Heart left ventricle (tissue), 16 donors: ENCODE measurements at regions of chr3 and their contacts with region 1.

Region 1: GRCh38 chr3:42652611-42653302 is 740 bp upstream of the ZBTB47 start:
- DNase-seq: peak; percentile 60 to 77 (median 75)
- ATAC-seq: peak; percentile 16 to 58 (median 50)
- H3K4me3 ChIP-seq: peak overlapping the region in 11 of 12 donors; percentile 68 to 99 (median 89)
- H3K27ac ChIP-seq: peak overlapping the region; percentile 84 to 99 (median 94)
- H3K4me1 ChIP-seq: peaks cover 11 to 88% (median 51%) of the 10 kb centered on the region in 12 donors
- H3K27me3 ChIP-seq: no peaks in the 10 kb centered on the region
- CTCF ChIP-seq: no peak
- POLR2A ChIP-seq: peak in 1 of 2 donors; percentile 84

Region 2: GRCh38 chr3:42214565-42215283 is 438.0 kb before region 1 on chr3:
- intact Hi-C with region 1: no loop called
- DNase-seq: no peak
- ATAC-seq: no peak
- H3K4me3 ChIP-seq: no peak overlapping the region
- H3K27ac ChIP-seq: no peak overlapping the region
- H3K4me1 ChIP-seq: peaks cover 0 to 11% (median 0%) of the 10 kb centered on the region in 12 donors
- H3K27me3 ChIP-seq: no peaks in the 10 kb centered on the region
- CTCF ChIP-seq: no peak
- POLR2A ChIP-seq: no peak

Region 3: GRCh38 chr3:42367903-42368302 is 284.9 kb before region 1 on chr3:
- intact Hi-C with region 1: no loop called
- DNase-seq: no peak
- ATAC-seq: no peak
- H3K4me3 ChIP-seq: no peak overlapping the region
- H3K27ac ChIP-seq: no peak overlapping the region
- H3K4me1 ChIP-seq: peaks cover 0 to 12% (median 3%) of the 10 kb centered on the region in 12 donors
- H3K27me3 ChIP-seq: no peaks in the 10 kb centered on the region
- CTCF ChIP-seq: no peak
- POLR2A ChIP-seq: no peak

Region 4: GRCh38 chr3:42581709-42582473 is 70.9 kb before region 1 on chr3 and contains the start of gene SEC22C:
- intact Hi-C with region 1: loop called in 2 of 10 experiments (anchors 5 to 10 kb)
- DNase-seq: peak; percentile 95 to 98 (median 96)
- ATAC-seq: peak; percentile 98 to 99 (median 99)
- H3K4me3 ChIP-seq: peak within 1 kb of the TSS; percentile 79 to 96 (median 88)
- H3K27ac ChIP-seq: peak within 1 kb of the TSS; percentile 80 to 95 (median 89)
- H3K4me1 ChIP-seq: peaks cover 0 to 25% (median 14%) of the 10 kb centered on the region in 12 donors
- H3K27me3 ChIP-seq: no peaks in the 10 kb centered on the region
- CTCF ChIP-seq: peak in 9 of 12 donors; percentile 20 to 55 (median 37)
- POLR2A ChIP-seq: peak; percentile 84 to 96
- total RNA-seq, gene SEC22C: 19.9 to 40.5 (median 28.9) TPM

Region 5: DNA sequence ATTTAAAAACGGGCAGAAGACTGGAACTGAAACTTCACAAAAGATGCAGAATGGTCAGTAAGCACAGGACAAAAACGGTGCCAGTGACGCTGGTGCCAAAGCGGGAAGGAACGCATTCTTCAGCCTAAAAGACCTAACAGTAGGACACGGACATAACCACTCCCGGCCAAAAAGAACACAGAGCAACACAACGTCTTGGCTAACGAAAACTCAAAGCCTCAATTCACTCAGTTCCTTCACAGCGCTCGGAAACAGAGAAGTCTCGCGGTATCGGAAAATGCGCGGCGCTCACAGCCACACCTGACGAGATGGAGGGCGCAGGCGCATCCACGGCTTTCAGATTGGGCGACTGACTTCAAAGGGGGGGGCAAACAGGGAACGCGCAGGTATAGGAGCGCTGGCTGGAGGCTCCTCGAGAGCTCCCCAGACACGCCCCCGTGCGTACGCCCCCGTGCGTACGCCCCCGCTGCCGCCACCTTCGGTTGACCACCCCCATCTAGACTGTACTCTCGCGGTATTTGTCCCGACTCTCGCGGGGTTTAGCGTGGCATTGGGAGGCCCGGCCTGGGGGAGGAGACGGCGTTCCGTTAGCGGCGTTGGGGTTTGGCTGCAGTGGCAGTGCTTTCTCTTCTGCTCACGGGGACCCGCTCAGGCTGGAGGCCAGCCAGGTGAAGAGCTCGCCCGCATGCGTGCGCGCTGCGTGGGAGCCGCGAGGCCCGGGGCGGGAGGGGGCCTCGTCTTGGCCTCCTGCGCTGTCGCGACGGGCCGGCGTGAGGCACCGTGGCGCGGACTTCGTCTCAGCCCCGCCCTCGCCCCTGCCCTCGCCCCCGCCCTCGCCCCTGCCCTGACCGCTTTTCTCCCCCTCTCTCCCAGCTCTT is 52.4 kb before region 1 on chr3 and contains the start of gene NKTR:
- intact Hi-C with region 1: loop called in 7 of 10 experiments (anchors 2 to 5 kb)
- DNase-seq: peak; percentile 96 to 98 (median 97)
- ATAC-seq: peak; percentile 94 to 96 (median 95)
- H3K4me3 ChIP-seq: peak within 1 kb of the TSS; percentile 74 to 97 (median 88)
- H3K27ac ChIP-seq: peak within 1 kb of the TSS; percentile 95 to 100 (median 98)
- H3K4me1 ChIP-seq: peaks cover 0 to 36% (median 25%) of the 10 kb centered on the region in 12 donors
- H3K27me3 ChIP-seq: no peaks in the 10 kb centered on the region
- CTCF ChIP-seq: peak in 4 of 12 donors; percentile 12 to 35 (median 14)
- POLR2A ChIP-seq: peak in 1 of 2 donors; percentile 90
- total RNA-seq, gene NKTR: 14.6 to 40.6 (median 20.9) TPM

Region 6: GRCh38 chr3:42683875-42684598 is 31.3 kb after region 1 on chr3:
- intact Hi-C with region 1: loop called in 1 of 10 experiments (anchors 2 kb)
- DNase-seq: peak; percentile 65 to 89 (median 81)
- ATAC-seq: peak; percentile 89 to 93 (median 91)
- H3K4me3 ChIP-seq: peak overlapping the region in 1 of 12 donors; percentile 26
- H3K27ac ChIP-seq: peak overlapping the region; percentile 78 to 96 (median 90)
- H3K4me1 ChIP-seq: peaks cover 0 to 25% (median 8%) of the 10 kb centered on the region in 12 donors
- H3K27me3 ChIP-seq: peaks cover 0 to 6% (median 0%) of the 10 kb centered on the region in 9 donors
- CTCF ChIP-seq: no peak
- POLR2A ChIP-seq: peak in 1 of 2 donors; percentile 16

Region 7: DNA sequence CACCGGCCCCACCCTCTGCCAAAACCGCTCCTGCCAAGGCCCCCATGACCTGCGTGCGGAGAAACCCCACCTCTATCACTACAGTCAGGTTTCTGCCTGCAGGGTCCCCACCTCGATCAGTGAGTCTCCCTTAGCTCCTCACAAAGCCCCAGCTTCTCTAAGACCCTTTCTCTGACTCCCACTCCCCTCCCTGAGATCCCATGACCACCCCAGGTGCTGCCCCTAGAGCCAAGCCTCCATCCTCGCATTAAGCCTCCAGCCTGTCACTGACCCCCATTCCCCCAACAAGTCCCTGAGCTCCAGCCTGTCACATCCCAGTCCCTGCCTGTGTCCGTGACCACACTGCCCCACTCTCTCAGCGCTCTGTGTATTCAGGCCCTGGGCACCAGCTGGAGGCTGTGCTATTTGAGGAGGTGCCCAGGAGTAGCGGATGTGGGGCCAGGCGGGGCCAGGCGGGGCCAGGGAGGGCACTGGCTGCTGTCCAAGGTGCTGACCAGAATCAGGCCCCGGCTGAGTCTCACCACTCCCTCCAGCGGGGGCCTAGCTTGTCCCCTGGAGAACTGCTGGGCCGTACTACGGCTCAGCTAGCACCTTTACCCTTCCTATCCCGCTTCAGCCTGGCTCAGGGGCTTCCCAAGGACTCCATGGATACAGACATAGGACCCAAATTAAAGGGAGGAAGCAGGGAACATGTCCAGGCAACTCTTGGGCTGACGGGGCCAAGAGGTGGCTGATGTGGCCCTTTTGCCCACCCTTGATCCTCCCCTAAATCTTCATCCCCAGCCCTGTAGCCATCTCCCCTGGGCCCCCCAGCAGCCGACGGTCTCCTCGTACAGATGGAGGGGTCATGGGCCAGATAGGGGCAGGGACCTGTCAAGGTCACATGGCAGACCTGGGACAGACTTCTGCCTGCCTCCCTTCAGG is 48.6 kb after region 1 on chr3:
- intact Hi-C with region 1: loop called in 3 of 10 experiments (anchors 5 kb)
- DNase-seq: peak; percentile 85 to 90 (median 86)
- ATAC-seq: peak; percentile 75 to 81 (median 80)
- H3K4me3 ChIP-seq: peak overlapping the region; percentile 23 to 67 (median 54)
- H3K27ac ChIP-seq: peak overlapping the region; percentile 85 to 99 (median 96)
- H3K4me1 ChIP-seq: peaks cover 0 to 61% (median 6%) of the 10 kb centered on the region in 12 donors
- H3K27me3 ChIP-seq: no peaks in the 10 kb centered on the region
- CTCF ChIP-seq: peak in 2 of 12 donors; percentile 24 to 28
- POLR2A ChIP-seq: peak; percentile 1 to 79

Region 8: DNA sequence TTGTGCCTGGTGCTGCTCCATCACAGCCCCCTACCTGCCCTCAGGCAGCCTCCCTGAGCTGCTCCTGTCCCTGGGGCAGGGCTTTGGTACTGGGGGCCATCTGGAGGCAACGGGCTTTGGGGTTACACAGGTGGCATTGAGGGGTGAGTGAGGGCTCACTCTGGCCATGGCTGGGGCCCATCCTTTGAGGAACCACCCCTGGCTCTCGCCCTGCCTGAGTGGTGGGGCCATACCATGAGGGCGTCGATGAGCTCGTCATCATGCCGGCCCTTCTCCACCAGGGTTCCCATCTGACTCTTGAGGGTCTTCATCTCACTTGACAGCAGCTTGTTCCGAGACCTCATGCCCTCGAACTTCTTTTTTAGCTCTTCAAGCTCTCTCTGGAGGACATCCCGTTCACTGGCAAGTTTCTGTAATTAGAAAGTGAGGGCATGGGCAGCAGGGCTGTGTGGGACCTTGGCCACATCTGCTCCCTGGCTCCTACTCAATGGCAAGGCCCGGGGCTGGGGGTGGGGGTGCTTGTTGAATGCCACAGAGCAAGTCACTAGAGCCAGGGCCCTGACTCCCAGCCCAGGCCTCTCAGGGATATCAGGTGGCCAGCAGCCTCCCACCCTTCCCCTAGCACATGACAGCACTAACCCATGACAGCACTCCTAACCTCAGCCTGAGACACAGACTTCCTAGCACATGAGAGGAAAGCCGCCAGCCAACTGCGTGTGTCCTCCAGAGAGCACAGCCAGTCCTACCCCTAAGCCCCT is 86.8 kb after region 1 on chr3:
- intact Hi-C with region 1: loop called in 5 of 10 experiments (anchors 1 to 5 kb)
- DNase-seq: peak; percentile 89 to 97 (median 90)
- ATAC-seq: peak; percentile 96 to 97 (median 96)
- H3K4me3 ChIP-seq: no peak overlapping the region
- H3K27ac ChIP-seq: peak overlapping the region; percentile 77 to 99 (median 92)
- H3K4me1 ChIP-seq: peaks cover 0 to 36% (median 15%) of the 10 kb centered on the region in 12 donors
- H3K27me3 ChIP-seq: no peaks in the 10 kb centered on the region
- CTCF ChIP-seq: no peak
- POLR2A ChIP-seq: no peak

Region 9: GRCh38 chr3:42780892-42781700 is 128.3 kb after region 1 on chr3:
- intact Hi-C with region 1: no loop called
- DNase-seq: no peak
- ATAC-seq: peak in 3 of 4 donors; percentile 59 to 72 (median 70)
- H3K4me3 ChIP-seq: no peak overlapping the region
- H3K27ac ChIP-seq: peak overlapping the region in 2 of 12 donors; percentile 12 to 63
- H3K4me1 ChIP-seq: peaks cover 0 to 11% (median 3%) of the 10 kb centered on the region in 12 donors
- H3K27me3 ChIP-seq: no peaks in the 10 kb centered on the region
- CTCF ChIP-seq: peak; percentile 69 to 84 (median 78)
- POLR2A ChIP-seq: peak in 1 of 2 donors; percentile 13